ENCODE measurements at regions of chr3 and their contacts with region 1.

Region 1: DNA sequence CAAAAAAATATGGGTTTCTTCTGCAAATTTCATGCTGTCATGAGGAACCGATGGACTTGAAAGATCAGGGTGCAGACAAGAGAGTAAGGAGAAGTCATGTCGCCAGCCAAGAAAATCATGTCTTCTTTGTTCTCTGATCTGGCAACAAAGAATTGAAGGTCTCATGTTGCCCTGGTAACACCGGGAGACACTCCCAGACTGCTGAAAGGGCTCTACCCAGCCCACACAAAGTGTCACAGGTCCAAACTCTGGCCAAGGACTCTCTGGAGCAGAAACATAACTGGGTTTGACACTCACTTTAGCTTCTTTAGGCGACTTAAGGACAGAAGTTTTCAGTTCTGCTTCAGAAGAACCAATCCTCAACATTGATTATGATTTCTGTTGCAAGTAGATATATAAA is 42.9 kb downstream of the SIDT1 start:
- DNase-seq: no peak
- H3K4me3 ChIP-seq: no peak overlapping the region
- H3K27ac ChIP-seq: no peak overlapping the region
- H3K4me1 ChIP-seq: peaks cover 6% of the 10 kb centered on the region
- H3K27me3 ChIP-seq: peaks cover 0 to 16% of the 10 kb centered on the region in 2 experiments
- CTCF ChIP-seq: no peak
- POLR2A ChIP-seq: no peak

Region 2: GRCh38 chr3:113051302-113051711 is 523.9 kb before region 1 on chr3:
- CTCF ChIA-PET with region 1: interaction called, 3 read pairs
- POLR2A ChIA-PET with region 1: no interaction called
- dilution Hi-C with region 1: no loop called
- intact Hi-C with region 1: loop called (anchors 1 kb)
- DNase-seq: peak; percentile 82
- H3K4me3 ChIP-seq: no peak overlapping the region
- H3K27ac ChIP-seq: no peak overlapping the region
- H3K4me1 ChIP-seq: peaks cover 3% of the 10 kb centered on the region
- H3K27me3 ChIP-seq: peaks cover 0 to 11% of the 10 kb centered on the region in 2 experiments
- CTCF ChIP-seq: peak; percentile 75 to 79
- POLR2A ChIP-seq: no peak

Region 3: DNA sequence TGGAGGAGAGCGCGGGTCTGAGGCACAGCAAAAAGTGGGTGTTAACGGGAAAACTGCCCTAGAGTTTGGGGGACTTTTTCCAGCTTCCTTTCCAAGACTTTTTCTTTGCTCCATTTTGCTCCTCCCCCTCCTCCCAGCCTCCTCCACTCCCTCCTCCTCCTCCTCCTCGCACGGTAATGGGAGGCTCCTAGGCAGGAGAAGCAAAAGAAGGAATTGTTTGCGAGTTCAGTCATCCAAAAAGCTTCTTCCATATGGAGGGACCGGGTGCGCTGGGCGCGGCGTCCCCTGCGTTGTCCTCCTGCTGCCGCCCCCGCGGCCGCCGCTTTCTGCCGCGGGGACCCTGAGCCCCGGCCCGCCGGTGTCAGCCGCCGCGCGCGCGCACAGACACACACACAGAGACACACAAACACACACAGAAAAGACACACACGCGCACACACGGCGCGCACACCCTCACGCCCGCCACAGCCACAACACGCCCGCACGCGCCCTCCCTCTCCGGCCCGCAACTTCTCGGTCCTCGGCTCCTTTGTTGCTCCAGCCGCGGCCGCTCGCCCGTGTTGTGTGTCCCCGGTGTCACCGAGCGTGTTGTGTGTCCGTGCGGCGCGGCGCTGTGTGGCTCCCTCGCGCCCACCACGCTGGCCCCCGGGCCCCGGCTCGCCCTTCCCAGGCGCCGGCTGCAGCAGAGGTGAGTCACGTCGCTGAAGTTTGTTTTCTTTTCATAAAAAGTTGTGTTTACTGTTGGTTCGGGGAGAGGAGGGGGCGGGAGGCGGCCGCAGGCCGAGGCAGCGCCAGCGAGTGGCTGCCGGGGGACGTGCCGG is 363.7 kb before region 1 on chr3 and contains the start of gene BOC:
- CTCF ChIA-PET with region 1: no interaction called
- POLR2A ChIA-PET with region 1: no interaction called
- dilution Hi-C with region 1: no loop called
- intact Hi-C with region 1: loop called (anchors 10 kb)
- DNase-seq: peak; percentile 10
- H3K4me3 ChIP-seq: peak within 1 kb of the TSS; percentile 53 to 59 (median 53)
- H3K27ac ChIP-seq: no peak within 1 kb of the TSS
- H3K4me1 ChIP-seq: no peaks in the 10 kb centered on the region
- H3K27me3 ChIP-seq: peaks cover 30 to 53% of the 10 kb centered on the region in 2 experiments
- CTCF ChIP-seq: no peak
- POLR2A ChIP-seq: no peak
- total RNA-seq, gene BOC: not detected in 2 replicates

Region 4: GRCh38 chr3:113495035-113495434 is 80.2 kb before region 1 on chr3:
- CTCF ChIA-PET with region 1: interaction called, 79 read pairs
- POLR2A ChIA-PET with region 1: interaction called, 3 read pairs
- dilution Hi-C with region 1: no loop called
- intact Hi-C with region 1: loop called (anchors 1 kb)
- DNase-seq: peak; percentile 61
- H3K4me3 ChIP-seq: no peak overlapping the region
- H3K27ac ChIP-seq: no peak overlapping the region
- H3K4me1 ChIP-seq: peaks cover 25% of the 10 kb centered on the region
- H3K27me3 ChIP-seq: no peaks in the 10 kb centered on the region
- CTCF ChIP-seq: peak in 1 of 2 donors; percentile 38
- POLR2A ChIP-seq: no peak

Region 5: DNA sequence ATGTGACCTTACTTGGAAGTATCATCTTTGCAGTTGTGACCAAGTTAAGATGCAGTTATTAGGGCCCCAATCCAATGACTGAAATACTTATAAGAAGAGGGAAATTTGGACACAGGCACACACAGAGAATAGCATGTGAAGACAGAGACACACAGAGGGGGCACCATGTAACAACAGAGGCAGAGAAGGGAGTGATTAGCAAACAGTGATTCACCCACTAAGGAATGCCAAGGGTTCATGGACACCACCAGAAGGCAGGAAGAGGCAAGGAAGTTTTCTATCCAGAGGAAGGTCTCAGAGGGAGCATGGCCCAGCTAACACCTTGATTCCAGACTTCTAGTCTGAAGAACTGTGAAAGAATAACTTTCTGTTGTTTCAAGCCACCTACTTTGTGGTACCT is 17.8 kb before region 1 on chr3:
- CTCF ChIA-PET with region 1: interaction called, 22 read pairs
- POLR2A ChIA-PET with region 1: no interaction called
- dilution Hi-C with region 1: no loop called
- intact Hi-C with region 1: loop called (anchors 2 kb)
- DNase-seq: peak; percentile 26
- H3K4me3 ChIP-seq: no peak overlapping the region
- H3K27ac ChIP-seq: no peak overlapping the region
- H3K4me1 ChIP-seq: peaks cover 11% of the 10 kb centered on the region
- H3K27me3 ChIP-seq: peaks cover 0 to 2% of the 10 kb centered on the region in 2 experiments
- CTCF ChIP-seq: no peak
- POLR2A ChIP-seq: no peak